AG04450 (cell line): ENCODE measurements at regions of chr6 and their contacts with region 1.

Region 1: DNA sequence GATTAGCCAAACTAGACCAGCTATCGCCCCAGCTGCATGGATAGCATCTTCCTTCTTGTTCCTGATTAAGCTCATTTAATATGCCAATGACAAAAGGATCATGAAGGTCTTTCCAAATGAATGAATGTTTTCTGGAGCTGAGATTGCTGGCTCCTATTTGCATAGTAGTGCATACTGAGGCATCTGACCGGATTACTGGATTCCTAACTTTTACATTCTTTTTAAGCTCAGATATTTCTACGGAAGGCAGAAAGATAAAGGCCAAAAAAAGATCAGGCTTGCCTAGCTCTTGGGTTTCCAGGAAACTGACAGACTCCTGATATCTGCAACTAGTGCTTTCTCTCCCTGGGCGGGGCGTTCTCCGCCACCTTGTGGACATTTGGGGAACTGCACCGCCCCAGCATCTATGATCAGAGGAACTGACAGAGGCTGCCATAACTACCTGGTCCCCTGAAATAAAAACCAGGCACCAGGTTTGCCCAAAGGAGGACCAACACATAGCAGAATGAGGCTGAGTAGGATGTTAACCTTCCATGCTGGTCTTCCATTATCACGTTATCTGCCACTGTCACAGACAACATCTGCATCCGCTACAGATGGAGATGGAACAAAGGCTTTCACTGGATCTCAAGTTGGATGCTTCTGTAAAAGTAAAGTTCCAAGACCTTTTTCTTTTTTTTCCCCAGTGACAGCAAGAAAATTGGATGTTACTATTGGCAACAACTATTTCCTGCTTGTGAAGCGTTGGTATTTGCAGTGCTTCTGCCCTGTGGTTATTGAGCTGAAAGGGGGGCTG is 33.2 kb downstream of the NT5E start:
- DNase-seq: no peak
- H3K4me3 ChIP-seq: no peak overlapping the region
- H3K27ac ChIP-seq: no peak overlapping the region
- H3K27me3 ChIP-seq: no peaks in the 10 kb centered on the region
- CTCF ChIP-seq: peak; percentile 100

Region 2: GRCh38 chr6:85354761-85355618 is 128.1 kb before region 1 on chr6:
- CTCF ChIA-PET with region 1: interaction called, 412 read pairs
- POLR2A ChIA-PET with region 1: no interaction called
- DNase-seq: peak; percentile 51
- H3K4me3 ChIP-seq: no peak overlapping the region
- H3K27ac ChIP-seq: no peak overlapping the region
- H3K27me3 ChIP-seq: no peaks in the 10 kb centered on the region
- CTCF ChIP-seq: peak; percentile 91

Region 3: GRCh38 chr6:85421997-85422401 is 61.1 kb before region 1 on chr6:
- CTCF ChIA-PET with region 1: interaction called, 16 read pairs
- POLR2A ChIA-PET with region 1: no interaction called
- DNase-seq: no peak
- H3K4me3 ChIP-seq: no peak overlapping the region
- H3K27ac ChIP-seq: no peak overlapping the region
- H3K27me3 ChIP-seq: no peaks in the 10 kb centered on the region
- CTCF ChIP-seq: no peak

Region 4: DNA sequence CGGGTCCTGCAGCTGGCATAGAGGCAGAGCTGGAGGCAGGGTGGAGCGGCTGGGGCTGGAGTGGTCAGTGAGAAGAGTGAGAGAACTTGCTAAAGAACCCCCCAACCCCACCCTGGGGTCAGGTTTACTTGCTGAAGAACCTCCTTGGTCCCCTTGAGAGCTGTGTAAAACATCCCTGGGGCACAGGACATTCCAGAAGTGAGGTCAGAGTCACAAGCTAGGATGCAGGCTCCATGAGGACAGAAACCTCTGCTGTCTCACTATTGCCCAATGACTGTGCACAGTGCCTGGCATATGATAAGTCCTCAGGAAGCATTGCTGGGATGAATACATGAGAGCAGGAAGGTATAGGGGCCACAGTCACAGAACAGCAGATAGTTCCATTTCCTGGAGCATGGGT is 14.8 kb before region 1 on chr6:
- CTCF ChIA-PET with region 1: interaction called, 201 read pairs
- POLR2A ChIA-PET with region 1: no interaction called
- DNase-seq: no peak
- H3K4me3 ChIP-seq: no peak overlapping the region
- H3K27ac ChIP-seq: no peak overlapping the region
- H3K27me3 ChIP-seq: no peaks in the 10 kb centered on the region
- CTCF ChIP-seq: no peak

Region 5: GRCh38 chr6:85537055-85537494 is 54.0 kb after region 1 on chr6:
- CTCF ChIA-PET with region 1: interaction called, 45 read pairs
- POLR2A ChIA-PET with region 1: no interaction called
- DNase-seq: no peak
- H3K4me3 ChIP-seq: no peak overlapping the region
- H3K27ac ChIP-seq: no peak overlapping the region
- H3K27me3 ChIP-seq: no peaks in the 10 kb centered on the region
- CTCF ChIP-seq: peak; percentile 42